Activated CD4-positive, alpha-beta T cell treated with anti-CD3 and anti-CD28 coated beads for 36 hours (primary cell): ENCODE measurements at regions of chr1 and their contacts with region 1.

Region 1: DNA sequence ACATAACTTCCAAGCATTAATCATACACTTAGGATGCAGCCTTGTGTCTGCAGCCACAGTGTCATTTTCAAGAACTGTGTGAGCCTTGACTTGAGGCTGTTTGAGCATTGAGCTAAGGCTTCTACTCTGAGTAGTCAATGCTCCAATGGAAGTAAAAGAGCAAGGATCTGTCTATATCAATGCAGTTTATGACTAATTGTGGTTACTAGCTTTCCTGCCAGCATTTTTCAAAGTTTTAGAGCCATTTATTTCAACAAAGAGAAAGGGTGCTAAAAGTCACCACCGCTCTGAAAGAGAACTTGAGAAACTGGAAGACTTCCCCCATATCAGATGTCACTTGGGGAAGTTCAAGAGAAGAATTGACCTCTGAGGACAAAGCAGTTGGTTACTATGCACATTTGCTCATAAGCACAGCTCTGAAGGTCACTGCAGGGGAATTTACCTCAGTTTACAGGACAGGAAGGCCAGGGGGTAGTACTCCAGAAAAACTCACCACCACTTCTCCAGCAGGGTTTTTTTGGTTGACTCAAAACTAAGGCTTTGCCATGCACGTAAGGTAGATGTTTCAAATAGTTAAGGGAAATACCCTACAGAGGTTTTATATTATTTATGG is 24.5 kb upstream of the RGS1 start:
- DNase-seq: peak; percentile 32
- ATAC-seq: peak; percentile 88
- H3K4me3 Mint-ChIP-seq: peak overlapping the region; percentile 20
- H3K27ac Mint-ChIP-seq: peak overlapping the region; percentile 76
- H3K4me1 Mint-ChIP-seq: peaks cover 53% of the 10 kb centered on the region
- H3K27me3 Mint-ChIP-seq: no peaks in the 10 kb centered on the region

Region 2: GRCh38 chr1:192399161-192399560 is 151.9 kb before region 1 on chr1:
- CTCF ChIA-PET with region 1: no interaction called
- POLR2A ChIA-PET with region 1: no interaction called
- intact Hi-C with region 1: no loop called
- DNase-seq: no peak
- ATAC-seq: no peak
- H3K4me3 Mint-ChIP-seq: no peak overlapping the region
- H3K27ac Mint-ChIP-seq: no peak overlapping the region
- H3K4me1 Mint-ChIP-seq: no peaks in the 10 kb centered on the region
- H3K27me3 Mint-ChIP-seq: no peaks in the 10 kb centered on the region

Region 3: DNA sequence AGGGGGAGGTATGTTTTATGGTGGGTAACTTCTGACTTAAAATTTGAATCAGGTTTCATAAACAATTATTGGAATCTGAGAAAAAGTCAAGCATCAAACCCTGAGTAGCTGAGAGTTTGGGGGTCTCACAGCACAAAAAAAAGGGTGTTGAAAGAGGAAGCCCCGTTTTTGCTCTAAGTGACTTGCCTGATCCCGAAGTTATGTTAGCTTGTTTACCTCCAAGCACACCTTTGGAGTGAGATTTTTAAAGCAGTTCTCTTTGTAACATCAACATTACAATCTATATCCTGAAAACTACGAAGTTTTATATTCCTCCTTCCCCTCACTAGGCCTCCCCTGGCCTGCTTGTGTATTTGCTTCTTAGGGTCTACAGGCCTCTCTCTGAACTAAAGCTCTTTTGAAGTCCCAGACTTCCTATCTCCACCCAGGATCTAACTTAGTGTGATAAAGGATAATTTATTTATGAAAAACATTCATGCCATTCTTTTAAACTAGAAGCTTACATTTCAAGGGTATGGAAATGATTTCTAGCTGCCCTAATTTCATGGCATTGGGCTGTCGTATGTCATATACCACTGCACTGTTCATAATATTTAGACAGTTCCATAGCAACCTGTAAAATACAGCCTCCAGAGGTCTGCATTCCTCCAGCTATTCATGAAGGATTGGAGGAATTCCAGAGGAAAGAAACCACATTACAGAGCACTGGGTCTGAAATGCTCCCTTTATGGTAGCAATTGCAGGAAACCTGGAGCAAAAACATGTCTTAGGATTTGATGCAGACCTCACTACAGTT is 11.5 kb before region 1 on chr1:
- CTCF ChIA-PET with region 1: interaction called, 11 read pairs
- POLR2A ChIA-PET with region 1: interaction called, 10 read pairs
- intact Hi-C with region 1: no loop called
- DNase-seq: no peak
- ATAC-seq: no peak
- H3K4me3 Mint-ChIP-seq: peak overlapping the region; percentile 4
- H3K27ac Mint-ChIP-seq: peak overlapping the region; percentile 76
- H3K4me1 Mint-ChIP-seq: peaks cover 41% of the 10 kb centered on the region
- H3K27me3 Mint-ChIP-seq: no peaks in the 10 kb centered on the region

Region 4: DNA sequence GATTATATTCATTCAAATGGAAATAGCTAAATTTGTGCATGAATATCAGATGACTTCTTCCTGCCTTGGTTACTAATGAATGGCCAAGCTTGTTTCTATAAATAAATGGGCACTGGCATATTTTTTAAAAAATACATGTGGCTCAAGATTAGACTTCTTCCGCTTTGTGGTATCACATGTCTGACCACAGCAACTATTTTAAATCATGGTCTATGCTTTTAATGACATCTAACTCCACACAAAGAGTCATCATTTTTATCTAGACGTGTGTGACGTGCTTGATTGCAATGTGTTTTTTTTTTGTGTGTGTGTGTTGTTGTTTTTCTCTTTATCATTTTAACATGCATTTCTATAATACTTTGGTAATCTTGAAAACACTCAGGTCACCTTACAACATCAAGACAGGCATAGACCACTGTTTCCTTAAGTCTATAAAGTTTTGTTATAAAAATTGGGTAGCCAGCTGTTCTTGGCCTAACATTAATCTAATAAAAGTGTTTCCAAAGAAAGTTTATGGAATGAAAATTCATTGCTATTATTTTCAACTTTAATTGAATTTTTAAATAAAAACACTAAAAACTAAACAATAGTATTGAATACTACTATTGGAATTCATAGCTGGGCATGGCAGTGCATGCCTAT is 54.1 kb after region 1 on chr1:
- CTCF ChIA-PET with region 1: no interaction called
- POLR2A ChIA-PET with region 1: no interaction called
- intact Hi-C with region 1: no loop called
- DNase-seq: no peak
- ATAC-seq: no peak
- H3K4me3 Mint-ChIP-seq: no peak overlapping the region
- H3K27ac Mint-ChIP-seq: no peak overlapping the region
- H3K4me1 Mint-ChIP-seq: peaks cover 44% of the 10 kb centered on the region
- H3K27me3 Mint-ChIP-seq: no peaks in the 10 kb centered on the region